Activated CD4-positive, alpha-beta memory T cell treated with anti-CD3 and anti-CD28 coated beads, Interleukin-2, amount 10 ng/mL, durations not matched to agents 7 days and 5 days (primary cell): ENCODE measurements at regions of chr11 and their contacts with region 1.

Region 1: DNA sequence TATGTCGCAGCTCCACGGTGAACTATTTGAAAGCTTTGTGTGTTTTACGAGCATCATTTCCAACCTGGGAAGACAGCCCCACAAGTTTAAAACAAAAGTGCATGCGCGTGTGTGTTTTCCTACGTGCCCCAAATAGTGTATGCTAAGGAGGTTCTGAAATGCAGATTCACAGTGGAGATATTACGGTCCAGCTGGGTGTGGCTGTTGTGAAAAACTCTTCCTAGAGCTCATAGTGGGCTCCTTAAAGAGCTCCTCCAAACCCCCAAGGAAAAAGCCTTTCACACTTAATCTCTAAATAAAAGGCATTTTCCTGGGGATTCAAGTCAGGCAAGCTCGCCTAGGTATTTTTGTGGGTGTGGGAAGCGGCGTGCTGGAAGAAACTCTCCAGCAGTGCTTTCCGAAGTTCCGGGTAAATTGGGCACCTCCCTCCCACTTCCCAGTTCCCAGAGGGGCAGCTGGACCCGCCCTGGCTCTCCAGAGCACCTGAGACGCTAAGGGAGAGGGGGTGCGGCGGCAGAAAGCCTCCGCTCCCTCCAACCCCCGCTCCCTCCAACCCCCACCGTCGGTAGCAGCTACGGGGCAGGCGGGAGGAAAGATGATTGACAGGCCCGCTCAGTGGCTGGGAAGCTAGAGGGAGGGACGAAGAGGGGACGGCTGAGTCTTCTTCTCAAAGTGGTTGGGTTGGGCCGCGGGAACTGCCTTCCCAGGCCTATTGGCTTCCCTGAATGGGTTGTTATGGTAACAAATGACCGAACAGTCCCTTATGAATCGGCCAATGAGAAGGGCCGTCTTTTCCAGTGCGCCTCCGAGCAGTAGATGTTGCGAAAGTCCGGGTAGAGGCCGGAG is 558 bp upstream of the PCF11 start:
- DNase-seq: peak; percentile 99
- H3K4me3 Mint-ChIP-seq: peak overlapping the region; percentile 100
- H3K27ac Mint-ChIP-seq: peak overlapping the region; percentile 100
- H3K4me1 Mint-ChIP-seq: peaks cover 34% of the 10 kb centered on the region
- H3K27me3 Mint-ChIP-seq: no peaks in the 10 kb centered on the region

Region 2: DNA sequence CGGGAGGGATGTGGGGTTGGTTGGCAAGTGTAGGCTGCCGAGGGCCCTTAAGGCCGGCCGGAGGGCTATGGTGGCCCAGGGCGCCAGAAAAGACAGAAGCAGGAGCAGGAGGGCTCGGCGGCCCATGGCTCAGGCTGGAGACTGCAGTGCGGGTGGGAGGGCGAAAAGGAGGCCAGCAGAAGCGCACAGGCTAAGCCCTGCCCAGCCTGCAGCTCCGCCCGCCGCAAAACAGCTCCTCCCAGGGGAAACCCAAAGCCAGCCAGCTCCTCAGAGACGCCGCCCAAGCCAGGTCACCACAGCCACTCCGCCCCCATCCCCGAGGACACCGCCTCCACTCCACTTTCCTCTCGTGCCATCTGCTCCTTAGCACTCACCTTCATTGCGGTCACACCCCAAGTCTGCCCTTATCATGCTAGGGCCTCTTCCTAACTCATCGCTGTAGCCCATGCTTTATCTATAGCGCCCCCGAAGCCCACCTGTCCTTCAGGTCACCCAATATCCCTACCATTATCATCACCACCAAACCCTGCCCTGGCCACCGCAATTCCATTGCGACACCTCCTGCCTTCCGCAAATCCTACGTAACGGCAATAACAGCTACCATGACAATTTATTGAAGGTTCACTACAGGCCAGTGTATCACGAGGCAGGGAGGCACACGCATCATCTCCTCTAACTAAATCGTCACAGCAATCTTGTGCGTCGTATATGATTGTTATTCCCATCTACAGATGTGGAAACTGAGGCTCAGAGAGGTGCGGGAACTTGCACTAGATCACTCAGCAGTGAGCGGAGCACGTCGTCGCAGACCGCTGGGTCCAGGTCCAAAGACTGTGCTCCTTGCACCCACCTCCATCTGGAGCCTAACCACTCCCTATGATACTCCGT is 255.9 kb before region 1 on chr11 and contains the start of gene PRCP:
- CTCF ChIA-PET with region 1: interaction called, 20 read pairs
- POLR2A ChIA-PET with region 1: interaction called, 124 read pairs
- DNase-seq: peak; percentile 94
- H3K4me3 Mint-ChIP-seq: peak within 1 kb of the TSS; percentile 97
- H3K27ac Mint-ChIP-seq: peak within 1 kb of the TSS; percentile 100
- H3K4me1 Mint-ChIP-seq: peaks cover 43% of the 10 kb centered on the region
- H3K27me3 Mint-ChIP-seq: no peaks in the 10 kb centered on the region
- total RNA-seq, gene PRCP: 24.5 to 30.1 TPM

Region 3: DNA sequence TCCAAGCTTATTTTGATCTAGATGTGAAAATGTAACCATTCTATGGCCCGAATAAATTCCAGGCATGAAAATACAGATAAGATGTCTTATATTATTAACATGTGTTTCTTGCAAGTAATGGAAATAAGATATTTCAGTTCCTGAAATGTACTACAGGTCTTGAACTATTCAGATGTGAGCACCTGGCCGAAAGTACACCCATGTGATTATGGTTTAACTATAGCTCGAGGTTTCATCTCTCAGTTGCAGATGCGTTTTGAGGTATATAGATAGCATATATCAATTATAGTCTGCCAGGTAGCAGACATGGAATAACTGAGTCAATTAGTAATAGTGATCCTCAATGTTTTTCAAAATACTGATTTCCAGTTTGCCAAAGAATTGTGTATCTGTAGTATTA is 186.6 kb before region 1 on chr11:
- CTCF ChIA-PET with region 1: no interaction called
- POLR2A ChIA-PET with region 1: interaction called, 14 read pairs
- DNase-seq: no peak
- H3K4me3 Mint-ChIP-seq: no peak overlapping the region
- H3K27ac Mint-ChIP-seq: no peak overlapping the region
- H3K4me1 Mint-ChIP-seq: peaks cover 13% of the 10 kb centered on the region
- H3K27me3 Mint-ChIP-seq: peaks cover 13% of the 10 kb centered on the region

Region 4: DNA sequence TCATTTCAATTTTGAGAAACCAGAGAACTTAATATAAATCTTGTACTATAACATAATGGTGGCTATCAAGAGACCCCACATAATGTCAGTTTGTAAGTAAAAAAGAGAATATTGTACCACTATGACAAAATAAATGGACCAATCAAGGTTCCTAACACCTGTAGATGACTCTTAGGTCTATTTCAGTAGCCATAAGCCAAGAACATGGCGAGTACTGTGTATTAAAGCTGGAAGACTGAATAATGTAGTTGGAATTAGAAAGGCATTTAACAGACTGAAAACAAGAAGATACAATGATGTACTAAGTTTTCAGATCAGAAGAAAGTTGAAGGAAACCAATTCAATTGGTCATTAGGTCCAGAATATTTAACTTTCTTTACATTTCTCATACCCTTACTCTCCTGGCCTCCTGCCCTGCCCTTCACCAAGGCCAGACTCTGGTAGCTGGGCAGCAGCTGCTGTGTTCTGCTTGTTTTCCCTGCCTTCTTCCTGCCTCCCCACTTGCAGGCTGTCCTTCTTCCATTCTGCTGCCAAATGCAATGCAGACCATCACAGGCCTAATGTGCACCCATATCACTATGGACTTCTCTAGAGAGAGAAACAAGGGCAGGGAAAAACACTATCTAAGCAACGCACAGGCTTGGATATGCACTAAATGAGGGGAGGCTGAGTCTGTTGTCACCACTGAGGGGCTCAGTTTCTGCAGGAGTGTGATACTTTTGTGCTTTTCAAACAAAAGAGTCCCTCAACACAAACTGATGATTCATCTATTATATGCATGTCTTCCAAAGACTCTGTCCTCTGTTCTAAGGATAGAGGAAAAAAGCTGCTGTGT is 144.8 kb before region 1 on chr11:
- CTCF ChIA-PET with region 1: no interaction called
- POLR2A ChIA-PET with region 1: no interaction called
- DNase-seq: no peak
- H3K4me3 Mint-ChIP-seq: no peak overlapping the region
- H3K27ac Mint-ChIP-seq: no peak overlapping the region
- H3K4me1 Mint-ChIP-seq: peaks cover 19% of the 10 kb centered on the region
- H3K27me3 Mint-ChIP-seq: no peaks in the 10 kb centered on the region

Region 5: GRCh38 chr11:83071567-83072349 is 84.6 kb before region 1 on chr11 and contains the start of gene RAB30:
- CTCF ChIA-PET with region 1: interaction called, 15 read pairs
- POLR2A ChIA-PET with region 1: interaction called, 171 read pairs
- DNase-seq: peak; percentile 95
- H3K4me3 Mint-ChIP-seq: no peak within 1 kb of the TSS
- H3K27ac Mint-ChIP-seq: no peak within 1 kb of the TSS
- H3K4me1 Mint-ChIP-seq: peaks cover 44% of the 10 kb centered on the region
- H3K27me3 Mint-ChIP-seq: no peaks in the 10 kb centered on the region
- total RNA-seq, gene RAB30: 9.9 to 10.2 TPM

Region 6: DNA sequence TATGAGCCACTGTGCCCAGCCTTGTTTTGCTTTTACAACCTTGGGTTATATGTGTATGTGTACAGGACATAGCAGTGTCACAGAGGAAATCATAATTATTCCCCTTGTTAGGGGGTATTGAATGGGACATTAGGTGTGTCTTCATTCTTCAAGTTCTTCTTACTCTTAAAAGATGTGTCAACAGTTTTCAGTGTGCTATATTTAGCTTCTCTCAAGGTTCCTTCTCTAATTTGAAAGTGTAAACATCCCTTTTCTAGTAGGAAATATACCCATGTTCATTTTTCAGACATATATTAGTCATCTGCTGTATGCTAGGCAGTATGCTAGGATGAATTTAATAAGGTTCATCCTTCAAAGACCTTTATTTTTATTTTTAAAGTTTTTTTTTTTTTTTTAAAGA is 17.6 kb after region 1 on chr11:
- CTCF ChIA-PET with region 1: interaction called, 4 read pairs
- POLR2A ChIA-PET with region 1: interaction called, 42 read pairs
- DNase-seq: no peak
- H3K4me3 Mint-ChIP-seq: no peak overlapping the region
- H3K27ac Mint-ChIP-seq: peak overlapping the region; percentile 61
- H3K4me1 Mint-ChIP-seq: peaks cover 65% of the 10 kb centered on the region
- H3K27me3 Mint-ChIP-seq: no peaks in the 10 kb centered on the region

Region 7: GRCh38 chr11:83193315-83194280 is 37.2 kb after region 1 on chr11 and contains the start of gene ANKRD42:
- CTCF ChIA-PET with region 1: interaction called, 3 read pairs
- POLR2A ChIA-PET with region 1: interaction called, 20 read pairs
- DNase-seq: peak; percentile 88
- H3K4me3 Mint-ChIP-seq: peak within 1 kb of the TSS; percentile 91
- H3K27ac Mint-ChIP-seq: peak within 1 kb of the TSS; percentile 79
- H3K4me1 Mint-ChIP-seq: peaks cover 26% of the 10 kb centered on the region
- H3K27me3 Mint-ChIP-seq: no peaks in the 10 kb centered on the region
- total RNA-seq, gene ANKRD42: 1.7 TPM